ENCODE measurements at regions of chr11 and their contacts with region 1.

Region 1: GRCh38 chr11:41461057-41461681 is 1.7 kb upstream of the LRRC4C start:
- DNase-seq: no peak
- H3K4me3 ChIP-seq: no peak overlapping the region
- H3K27ac ChIP-seq: no peak overlapping the region
- H3K4me1 ChIP-seq: peaks cover 0 to 9% (median 2%) of the 10 kb centered on the region in 4 donors
- H3K27me3 ChIP-seq: peaks cover 0 to 39% (median 5%) of the 10 kb centered on the region in 4 donors
- CTCF ChIP-seq: peak; percentile 55 to 72 (median 64)
- EP300 ChIP-seq: no peak
- POLR2A ChIP-seq: no peak

Region 2: DNA sequence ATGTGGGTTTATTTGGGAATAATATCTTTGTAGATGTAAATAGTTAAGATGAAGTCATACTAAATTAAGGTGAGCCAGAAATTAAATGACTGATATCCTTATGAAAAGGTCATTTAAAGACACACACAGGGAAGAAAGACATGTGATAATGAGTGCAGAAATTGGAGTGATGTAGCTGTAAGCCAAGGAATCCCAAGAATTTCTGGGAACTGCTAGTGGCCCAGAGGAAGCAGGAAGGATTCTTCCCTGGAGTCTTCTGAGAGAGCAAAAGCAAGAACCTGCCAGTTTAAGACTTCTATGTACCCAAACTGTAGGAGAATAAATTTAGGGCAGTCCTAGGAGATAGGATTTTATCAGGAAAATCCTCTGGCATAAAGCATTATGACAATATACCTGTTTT is 68.6 kb before region 1 on chr11:
- intact Hi-C with region 1: no loop called
- DNase-seq: no peak
- H3K4me3 ChIP-seq: no peak overlapping the region
- H3K27ac ChIP-seq: no peak overlapping the region
- H3K4me1 ChIP-seq: no peaks in the 10 kb centered on the region
- H3K27me3 ChIP-seq: no peaks in the 10 kb centered on the region
- CTCF ChIP-seq: no peak
- EP300 ChIP-seq: no peak
- POLR2A ChIP-seq: no peak

Region 3: DNA sequence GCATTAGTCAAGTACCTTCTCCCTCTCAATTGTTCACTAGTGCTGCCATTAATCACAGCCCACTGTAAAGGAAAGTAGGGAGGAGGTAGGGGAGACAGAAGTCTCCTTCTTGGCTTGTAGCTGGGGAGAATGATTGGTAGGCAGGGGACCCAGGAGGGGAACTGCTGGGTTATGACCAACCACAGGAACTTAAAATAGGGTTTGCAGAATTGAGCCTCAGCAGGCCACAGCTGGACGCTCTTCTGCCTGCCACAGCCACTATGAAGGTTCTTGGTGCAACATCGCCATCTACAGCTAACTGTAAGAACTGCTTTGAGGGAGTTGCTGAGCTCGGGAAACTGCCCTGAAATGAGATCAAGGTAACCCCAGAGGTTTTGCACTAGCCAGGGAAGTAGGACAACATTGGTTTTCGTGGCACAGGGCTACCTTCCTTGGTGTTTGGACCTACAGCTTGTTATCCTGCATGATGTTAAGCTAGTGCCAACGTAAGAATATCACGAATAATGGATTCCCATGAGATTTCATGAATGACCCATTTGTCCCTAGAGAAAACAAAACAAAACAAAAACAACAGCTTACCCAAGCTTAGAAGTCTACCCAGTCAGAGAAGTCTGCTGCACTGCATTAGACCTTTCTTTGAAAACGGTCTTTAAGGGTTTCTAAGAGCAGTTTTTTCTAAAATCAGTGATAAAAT is 1063.5 kb after region 1 on chr11:
- intact Hi-C with region 1: loop called (anchors 5 kb)
- DNase-seq: no peak
- H3K4me3 ChIP-seq: no peak overlapping the region
- H3K27ac ChIP-seq: no peak overlapping the region
- H3K4me1 ChIP-seq: no peaks in the 10 kb centered on the region
- H3K27me3 ChIP-seq: peaks cover 0 to 11% (median 0%) of the 10 kb centered on the region in 4 donors
- CTCF ChIP-seq: peak; percentile 49 to 69 (median 57)
- EP300 ChIP-seq: no peak
- POLR2A ChIP-seq: no peak